HEK293 (cell line): ENCODE measurements at regions of chr10 and their contacts with region 1.

Region 1: GRCh38 chr10:99659031-99659867 is at the start of gene ENTPD7:
- H3K4me3 ChIP-seq: peak within 1 kb of the TSS; percentile 84
- H3K27ac ChIP-seq: peak within 1 kb of the TSS; percentile 13; the same call in 1 of the 2 replicates
- H3K4me1 ChIP-seq: 0 out of 2 replicates have a peak, but pooled peaks cover 2% of the 10 kb centered on the region
- CTCF ChIP-seq: peak; percentile 72

Region 2: GRCh38 chr10:99430451-99431189 is 228.6 kb before region 1 on chr10 and contains the start of gene GOT1:
- CTCF ChIA-PET with region 1: interaction called, 3 read pairs
- POLR2A ChIA-PET with region 1: interaction called, 12 read pairs
- H3K4me3 ChIP-seq: peak within 1 kb of the TSS; percentile 87
- H3K27ac ChIP-seq: peak within 1 kb of the TSS; percentile 69
- H3K4me1 ChIP-seq: peaks cover 9% of the 10 kb centered on the region; the same call in 1 of the 2 replicates
- CTCF ChIP-seq: no peak; the same call in 1 of the 2 replicates

Region 3: GRCh38 chr10:99620713-99621453 is 38.4 kb before region 1 on chr10:
- CTCF ChIA-PET with region 1: no interaction called
- POLR2A ChIA-PET with region 1: interaction called, 28 read pairs
- H3K4me3 ChIP-seq: peak overlapping the region; percentile 59
- H3K27ac ChIP-seq: peak overlapping the region; percentile 99
- H3K4me1 ChIP-seq: 0 out of 2 replicates have a peak, but pooled peaks cover 7% of the 10 kb centered on the region
- CTCF ChIP-seq: peak; percentile 60; the same call in 1 of the 2 replicates

Region 4: GRCh38 chr10:99732033-99732912 is 73.0 kb after region 1 on chr10 and contains the starts of genes COX15 and CUTC:
- CTCF ChIA-PET with region 1: interaction called, 3 read pairs
- POLR2A ChIA-PET with region 1: interaction called, 11 read pairs
- H3K4me3 ChIP-seq: peak within 1 kb of the TSS; percentile 99
- H3K27ac ChIP-seq: peak within 1 kb of the TSS; percentile 61
- H3K4me1 ChIP-seq: no peaks in the 10 kb centered on the region
- CTCF ChIP-seq: peak; percentile 84